Cardiac septum (tissue), 1 donor: ENCODE measurements at regions of chr21 and their contacts with region 1.

Region 1: DNA sequence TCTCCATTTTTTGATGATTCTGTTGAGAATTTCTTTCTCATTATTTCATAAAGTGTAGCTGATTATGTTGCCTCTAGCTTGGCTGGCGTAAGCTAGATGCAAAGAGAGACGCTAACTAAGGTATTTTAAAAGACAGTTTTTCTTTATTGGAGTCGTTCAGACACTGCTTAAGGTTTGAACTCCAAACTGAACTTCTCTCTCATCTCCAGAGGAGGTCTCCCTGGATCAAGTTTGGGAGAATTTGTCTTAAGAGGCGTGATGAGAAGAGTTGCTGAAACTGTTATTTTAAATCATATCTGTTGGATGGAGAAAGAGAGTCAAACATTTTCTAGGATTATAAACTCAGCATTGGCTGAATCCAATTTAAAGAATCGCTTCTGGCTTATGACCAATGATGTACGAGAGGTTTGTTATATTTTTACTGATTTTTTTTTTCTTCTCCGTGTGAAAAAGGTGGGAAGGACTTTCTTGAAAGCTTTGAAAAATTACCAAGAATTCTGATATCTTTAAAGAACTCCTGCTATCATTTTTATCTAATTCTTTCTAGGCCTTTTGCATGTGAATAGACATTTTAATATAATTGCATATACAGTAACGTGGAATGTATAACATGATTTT is 34.0 kb downstream of the MAP3K7CL start:
- DNase-seq: no peak

Region 2: GRCh38 chr21:29085106-29085752 is 79.2 kb before region 1 on chr21:
- intact Hi-C with region 1: loop called (anchors 5 kb)
- DNase-seq: no peak

Region 3: DNA sequence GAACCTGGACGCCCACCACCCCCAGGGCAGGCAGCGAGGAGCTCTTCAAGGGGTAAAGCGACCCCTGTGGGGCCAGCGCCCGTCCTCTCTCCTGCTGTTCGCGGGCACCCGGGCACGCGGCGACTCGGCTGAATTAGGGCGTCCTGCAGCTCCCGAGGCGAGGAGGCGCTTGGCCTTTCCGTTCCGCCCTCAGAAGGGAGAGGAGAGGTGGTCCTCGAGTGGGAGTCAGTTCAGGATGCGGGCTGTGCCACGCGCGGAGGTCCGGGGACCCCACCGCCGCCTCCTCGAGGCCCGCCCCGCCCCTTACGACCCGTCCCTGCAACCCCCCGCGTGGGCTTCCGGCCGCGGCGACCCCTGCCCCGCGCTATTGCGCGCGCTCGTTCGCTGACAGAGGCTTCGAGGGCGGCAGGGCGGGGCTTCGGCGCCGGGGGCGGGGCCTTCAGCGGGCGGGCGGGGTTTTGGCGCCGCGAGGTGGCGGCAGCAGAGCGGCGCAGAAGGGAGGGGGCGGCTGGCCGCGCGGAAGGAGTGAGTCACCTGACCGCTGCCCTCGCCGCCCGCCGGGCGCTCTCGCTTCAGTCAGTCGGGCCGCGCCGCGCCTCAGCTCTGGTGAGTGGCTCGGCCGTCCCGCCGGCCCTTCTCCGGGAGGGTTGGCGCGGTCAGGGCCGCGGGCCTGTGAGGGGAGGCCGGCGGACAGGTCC is 134.1 kb after region 1 on chr21 and contains the start of gene BACH1:
- intact Hi-C with region 1: loop called (anchors 5 kb)
- DNase-seq: peak; percentile 95
- total RNA-seq, gene BACH1: 51.3 TPM

Region 4: DNA sequence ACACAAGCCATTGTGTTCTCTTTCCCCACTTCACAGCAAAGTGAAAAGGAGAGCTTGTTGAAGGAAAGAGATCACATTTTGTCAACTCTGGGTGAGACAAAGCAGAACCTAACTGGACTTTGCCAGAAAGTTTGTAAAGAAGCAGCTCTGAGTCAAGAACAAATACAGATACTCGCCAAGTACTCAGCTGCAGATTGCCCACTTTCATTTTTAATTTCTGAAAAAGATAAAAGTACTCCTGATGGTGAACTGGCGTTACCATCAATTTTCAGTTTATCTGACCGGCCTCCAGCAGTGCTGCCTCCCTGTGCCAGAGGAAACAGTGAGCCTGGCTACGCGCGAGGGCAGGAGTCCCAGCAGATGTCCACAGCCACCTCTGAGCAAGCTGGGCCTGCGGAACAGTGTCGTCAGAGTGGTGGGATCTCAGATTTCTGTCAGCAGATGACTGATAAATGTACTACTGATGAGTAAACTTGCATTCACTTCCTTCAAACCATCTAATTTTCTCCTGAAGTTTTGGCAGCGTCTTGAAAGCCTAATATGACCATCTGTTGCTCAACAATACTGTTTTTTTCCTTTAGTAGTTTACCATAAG is 178.0 kb after region 1 on chr21:
- intact Hi-C with region 1: loop called (anchors 5 kb)
- DNase-seq: no peak

Region 5: DNA sequence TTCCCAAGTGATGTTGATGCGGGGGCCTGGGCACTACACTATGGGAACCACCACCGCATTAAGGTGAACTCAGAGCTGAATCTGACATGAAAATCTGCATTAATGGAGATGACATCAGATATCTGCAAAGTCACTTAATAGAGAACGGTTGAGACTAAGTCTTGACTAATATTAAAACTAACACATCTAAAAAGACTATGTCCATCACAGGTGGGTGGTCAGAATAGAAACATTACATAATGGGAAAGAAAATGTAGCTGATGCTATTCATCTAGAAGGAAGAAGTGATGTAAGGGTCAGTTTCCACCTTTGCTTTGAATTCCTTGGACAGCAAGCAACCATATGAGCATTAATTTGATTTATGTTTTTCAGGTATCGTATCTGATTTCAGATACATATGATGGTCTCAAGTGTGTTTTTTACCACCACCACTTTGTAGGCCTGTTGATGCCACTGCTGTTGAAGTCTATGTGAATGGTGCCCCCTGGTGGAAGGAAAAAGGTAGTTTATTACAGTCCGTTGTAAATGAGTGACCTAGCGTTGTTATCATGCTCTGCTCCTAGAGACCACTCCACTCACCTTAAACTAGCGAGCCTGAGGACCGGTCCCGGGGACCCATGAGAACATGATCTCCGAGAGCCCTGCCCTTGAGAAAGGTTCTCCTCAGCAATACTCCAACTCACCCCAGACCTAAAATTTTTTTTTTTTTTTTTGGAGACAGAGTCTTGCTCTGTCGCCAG is 207.8 kb after region 1 on chr21:
- intact Hi-C with region 1: loop called (anchors 2 kb)
- DNase-seq: no peak